ENCODE measurements at regions of chr4 and their contacts with region 1.

Region 1: GRCh38 chr4:76257824-76258223 is 6.3 kb downstream of the FAM47E start:
- DNase-seq: no peak
- H3K4me3 ChIP-seq: no peak overlapping the region
- H3K27ac ChIP-seq: no peak overlapping the region
- H3K4me1 ChIP-seq: no peaks in the 10 kb centered on the region
- H3K27me3 ChIP-seq: no peaks in the 10 kb centered on the region
- CTCF ChIP-seq: no peak
- POLR2A ChIP-seq: no peak

Region 2: GRCh38 chr4:76334885-76335284 is 77.1 kb after region 1 on chr4:
- intact Hi-C with region 1: no loop called
- DNase-seq: no peak
- H3K4me3 ChIP-seq: no peak overlapping the region
- H3K27ac ChIP-seq: no peak overlapping the region
- H3K4me1 ChIP-seq: no peaks in the 10 kb centered on the region
- H3K27me3 ChIP-seq: no peaks in the 10 kb centered on the region
- CTCF ChIP-seq: no peak
- POLR2A ChIP-seq: no peak

Region 3: DNA sequence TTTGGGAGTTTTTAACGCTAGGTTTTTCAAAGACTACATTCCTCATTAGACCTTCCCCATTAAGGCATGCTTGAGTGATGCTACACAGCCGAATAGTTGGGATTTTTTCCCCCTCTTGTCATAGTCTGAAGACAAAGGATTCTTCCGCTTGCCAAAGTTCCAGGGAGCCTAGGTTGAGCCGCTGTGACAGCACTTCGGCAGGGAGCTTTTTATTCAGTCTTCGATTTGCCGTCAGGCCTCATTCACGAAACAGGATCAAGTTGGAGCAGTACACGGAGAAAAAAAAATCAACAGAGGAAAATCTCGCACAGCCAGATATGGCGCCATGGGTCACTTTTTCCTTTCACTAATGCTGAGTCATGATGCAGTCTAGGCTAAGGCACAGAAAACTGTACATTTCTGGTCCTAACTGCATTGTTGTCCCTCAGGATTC is 201.5 kb after region 1 on chr4:
- intact Hi-C with region 1: loop called (anchors 5 kb)
- DNase-seq: no peak
- H3K4me3 ChIP-seq: no peak overlapping the region
- H3K27ac ChIP-seq: peak overlapping the region; percentile 38 to 70
- H3K4me1 ChIP-seq: no peaks in the 10 kb centered on the region
- H3K27me3 ChIP-seq: no peaks in the 10 kb centered on the region
- CTCF ChIP-seq: no peak
- POLR2A ChIP-seq: no peak

Measured in breast epithelium (tissue), 4 donors.